Sigmoid colon (tissue), 7 donors: ENCODE measurements at regions of chr12 and their contacts with region 1.

Region 1: DNA sequence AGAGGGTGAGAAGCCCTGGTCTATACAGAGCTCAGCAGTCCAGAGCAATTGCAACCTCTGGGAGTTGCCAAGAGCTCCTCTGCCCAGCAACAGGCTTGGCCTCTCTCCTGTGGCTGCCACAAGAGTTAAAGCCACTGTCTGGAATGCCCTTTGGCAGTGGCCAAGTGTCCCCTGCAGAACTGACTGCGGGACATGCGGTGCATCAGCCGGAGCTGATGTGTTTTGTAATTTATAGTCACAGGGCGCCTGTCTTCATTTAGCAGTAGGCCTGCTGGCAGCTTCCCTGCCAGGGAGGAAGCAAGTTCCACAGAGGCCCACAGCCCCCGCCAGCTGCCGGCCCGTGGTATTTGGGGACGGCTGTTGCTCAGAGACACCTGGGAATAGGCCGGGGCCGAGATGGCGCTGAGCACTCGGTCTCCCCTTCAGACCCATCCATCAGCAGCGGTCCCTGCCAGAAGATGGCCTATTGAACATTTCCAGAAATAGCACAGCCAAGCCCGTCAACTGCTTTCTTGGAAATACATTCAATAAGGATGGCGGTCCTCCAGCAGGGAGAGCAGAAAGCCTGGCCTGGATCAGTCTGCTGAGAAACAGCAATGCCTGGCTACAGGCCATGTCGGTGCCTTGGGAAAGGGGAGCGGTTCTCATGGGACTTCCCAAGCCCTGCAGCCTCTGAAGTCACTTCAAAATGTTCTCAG is 217.4 kb downstream of the CRADD start:
- DNase-seq: peak; percentile 94
- H3K4me3 ChIP-seq: peak overlapping the region in 3 of 4 donors; percentile 24 to 29 (median 28)
- H3K27ac ChIP-seq: peak overlapping the region; percentile 76 to 88 (median 80)
- H3K4me1 ChIP-seq: peaks cover 0 to 35% (median 32%) of the 10 kb centered on the region in 4 donors
- H3K27me3 ChIP-seq: no peaks in the 10 kb centered on the region
- CTCF ChIP-seq: no peak
- EP300 ChIP-seq: peak in 1 of 4 donors; percentile 42
- POLR2A ChIP-seq: no peak

Region 2: GRCh38 chr12:93778306-93778705 is 116.2 kb before region 1 on chr12:
- intact Hi-C with region 1: loop called (anchors 5 kb)
- DNase-seq: peak; percentile 87
- H3K4me3 ChIP-seq: no peak overlapping the region
- H3K27ac ChIP-seq: peak overlapping the region; percentile 79 to 89 (median 84)
- H3K4me1 ChIP-seq: peaks cover 0 to 76% (median 58%) of the 10 kb centered on the region in 4 donors
- H3K27me3 ChIP-seq: no peaks in the 10 kb centered on the region
- CTCF ChIP-seq: no peak
- EP300 ChIP-seq: peak in 1 of 4 donors; percentile 43
- POLR2A ChIP-seq: no peak

Region 3: GRCh38 chr12:93825931-93826555 is 68.5 kb before region 1 on chr12:
- intact Hi-C with region 1: loop called (anchors 5 kb)
- DNase-seq: no peak
- H3K4me3 ChIP-seq: peak overlapping the region in 1 of 4 donors; percentile 5
- H3K27ac ChIP-seq: peak overlapping the region; percentile 74 to 91 (median 80)
- H3K4me1 ChIP-seq: peaks cover 0 to 63% (median 54%) of the 10 kb centered on the region in 4 donors
- H3K27me3 ChIP-seq: no peaks in the 10 kb centered on the region
- CTCF ChIP-seq: no peak
- EP300 ChIP-seq: peak in 2 of 4 donors; percentile 37 to 83
- POLR2A ChIP-seq: no peak

Region 4: DNA sequence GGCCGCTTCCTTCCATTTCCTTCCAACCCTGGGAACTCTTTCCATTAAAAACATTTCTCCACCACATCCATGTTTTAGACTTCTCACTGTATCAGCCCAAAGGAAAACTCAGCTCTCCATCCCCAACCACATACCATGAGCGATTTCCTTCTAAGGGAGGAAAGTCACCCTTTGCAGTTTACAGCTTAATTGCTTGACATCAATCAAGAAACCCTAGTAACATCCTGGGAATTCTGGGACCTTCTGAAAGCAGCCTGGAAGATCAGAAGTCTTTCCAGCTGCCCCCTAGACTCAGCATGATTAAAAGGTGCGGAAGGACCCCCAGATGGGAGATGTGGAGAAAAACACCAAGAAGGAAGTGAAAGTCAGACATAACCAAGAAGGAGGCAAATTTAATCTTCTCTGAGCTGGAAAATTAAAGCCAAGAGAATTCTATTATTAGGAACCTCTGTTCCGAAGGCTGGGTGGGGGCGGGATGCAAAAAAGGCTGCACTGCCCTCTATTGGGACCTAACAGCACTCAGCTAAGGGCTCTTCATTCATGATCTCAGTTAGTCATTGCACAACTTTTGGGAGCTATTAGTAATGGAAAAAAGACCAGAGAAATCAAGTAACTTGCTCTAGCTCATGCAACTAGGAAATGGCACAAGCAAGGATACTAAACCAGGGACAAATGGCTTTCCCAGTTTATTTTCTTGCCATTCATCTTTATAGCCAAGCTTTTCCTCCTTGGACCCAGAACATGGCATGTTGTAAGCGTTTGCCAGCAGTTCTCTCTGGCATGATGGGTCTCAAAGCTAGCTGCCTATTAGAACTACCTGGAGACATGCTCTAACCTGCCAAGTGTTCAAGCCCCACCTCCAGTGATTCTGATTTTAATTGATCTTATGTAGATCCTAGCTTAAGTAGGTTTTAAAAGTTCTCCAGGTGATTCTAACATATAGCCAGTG is 180.7 kb after region 1 on chr12:
- intact Hi-C with region 1: loop called (anchors 5 kb)
- DNase-seq: peak; percentile 90
- H3K4me3 ChIP-seq: no peak overlapping the region
- H3K27ac ChIP-seq: peak overlapping the region; percentile 64 to 80 (median 70)
- H3K4me1 ChIP-seq: peaks cover 0 to 25% (median 17%) of the 10 kb centered on the region in 4 donors
- H3K27me3 ChIP-seq: no peaks in the 10 kb centered on the region
- CTCF ChIP-seq: peak; percentile 46 to 60 (median 52)
- EP300 ChIP-seq: peak in 1 of 4 donors; percentile 61
- POLR2A ChIP-seq: no peak